Mammary epithelial cell (primary cell): ENCODE measurements at regions of chr14 and their contacts with region 1.

Region 1: DNA sequence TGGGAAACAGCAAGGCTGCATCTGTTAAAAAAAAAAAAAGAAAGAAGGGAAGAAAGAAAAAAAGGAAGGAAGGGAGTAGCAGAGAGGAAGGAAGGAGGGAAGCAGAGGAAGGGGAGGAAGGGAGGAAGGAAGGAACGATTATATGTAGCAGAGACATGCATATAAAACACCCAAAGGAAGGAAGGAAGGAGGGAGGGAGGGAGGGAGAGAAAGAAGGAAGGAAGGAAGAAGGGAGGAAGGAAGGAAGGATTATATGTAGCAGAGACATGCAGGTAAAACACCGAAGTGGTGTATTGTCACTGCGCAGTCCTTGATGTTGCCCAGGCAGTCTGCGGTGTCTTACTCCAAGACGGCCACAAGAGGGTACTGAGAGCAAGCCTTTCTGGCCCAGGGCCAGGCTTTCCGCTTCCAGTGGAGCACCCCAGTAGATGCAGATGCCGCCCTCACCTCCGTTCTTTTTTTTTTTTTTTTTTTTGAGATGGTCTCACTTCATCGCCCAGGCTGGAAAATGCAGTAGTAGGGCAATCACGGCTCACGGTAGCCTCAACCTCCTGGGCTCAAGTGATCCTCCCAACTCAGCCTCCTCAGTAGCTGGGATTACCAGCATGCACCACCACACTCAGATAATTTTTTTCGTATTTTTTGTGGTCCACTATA is 5.8 kb upstream of the LBHD2 start:
- DNase-seq: peak; percentile 58
- H3K4me3 ChIP-seq: no peak overlapping the region
- H3K27ac ChIP-seq: no peak overlapping the region
- H3K4me1 ChIP-seq: peaks cover 7% of the 10 kb centered on the region
- H3K27me3 ChIP-seq: no peaks in the 10 kb centered on the region
- CTCF ChIP-seq: peak; percentile 82 to 85

Region 2: DNA sequence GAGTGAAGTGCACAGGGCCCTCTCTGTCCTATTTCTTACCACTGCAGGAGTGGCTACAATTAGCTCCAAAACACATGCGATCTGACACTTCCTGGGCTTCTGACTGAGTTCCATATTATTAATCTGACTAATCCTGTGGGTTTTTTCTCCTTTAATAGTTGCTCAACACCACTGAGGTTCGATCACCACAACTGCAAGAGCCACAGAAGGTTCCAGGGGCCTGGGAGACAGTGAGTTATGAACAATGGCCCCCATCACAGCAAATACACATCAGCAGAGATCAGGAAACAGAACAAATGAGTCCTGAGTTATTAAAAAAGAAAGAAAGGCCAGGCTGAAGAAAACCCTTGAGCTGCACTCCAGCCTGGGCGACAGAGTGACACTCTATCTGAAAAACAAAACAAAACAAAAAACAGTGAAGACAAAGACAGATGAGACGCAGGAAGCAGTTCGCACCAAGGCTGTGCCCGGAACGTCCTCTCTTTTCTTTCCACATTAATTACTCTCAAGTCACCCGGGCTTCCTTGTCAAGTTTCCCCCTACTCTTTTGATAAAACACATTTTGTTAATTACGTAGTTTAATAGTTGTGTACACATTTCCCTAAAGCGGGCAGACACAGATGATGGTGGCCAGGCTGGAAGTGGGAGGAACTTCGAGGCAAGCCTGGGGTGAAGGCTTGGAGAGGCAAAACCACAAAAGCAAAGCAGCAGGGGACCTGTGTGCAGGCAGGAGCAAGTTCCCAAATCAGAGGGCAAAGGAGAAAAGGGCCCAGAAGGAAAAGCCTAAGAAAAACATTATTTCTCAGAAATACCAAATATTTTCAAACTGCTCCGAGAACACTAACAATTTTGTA is 63.5 kb before region 1 on chr14:
- CTCF ChIA-PET with region 1: no interaction called
- dilution Hi-C with region 1: no loop called
- in situ Hi-C with region 1: no loop called
- intact Hi-C with region 1: no loop called
- DNase-seq: peak; percentile 57
- H3K4me3 ChIP-seq: no peak overlapping the region
- H3K27ac ChIP-seq: no peak overlapping the region
- H3K4me1 ChIP-seq: peaks cover 19% of the 10 kb centered on the region
- H3K27me3 ChIP-seq: no peaks in the 10 kb centered on the region
- CTCF ChIP-seq: no peak

Region 3: GRCh38 chr14:103031956-103032355 is 46.3 kb before region 1 on chr14:
- CTCF ChIA-PET with region 1: interaction called, 26 read pairs
- dilution Hi-C with region 1: no loop called
- in situ Hi-C with region 1: no loop called
- intact Hi-C with region 1: no loop called
- DNase-seq: no peak
- H3K4me3 ChIP-seq: no peak overlapping the region
- H3K27ac ChIP-seq: no peak overlapping the region
- H3K4me1 ChIP-seq: peaks cover 3% of the 10 kb centered on the region
- H3K27me3 ChIP-seq: no peaks in the 10 kb centered on the region
- CTCF ChIP-seq: peak; percentile 23 to 44

Region 4: GRCh38 chr14:103045371-103045869 is 32.8 kb before region 1 on chr14:
- CTCF ChIA-PET with region 1: no interaction called
- dilution Hi-C with region 1: no loop called
- in situ Hi-C with region 1: no loop called
- intact Hi-C with region 1: no loop called
- DNase-seq: no peak
- H3K4me3 ChIP-seq: no peak overlapping the region
- H3K27ac ChIP-seq: no peak overlapping the region
- H3K4me1 ChIP-seq: no peaks in the 10 kb centered on the region
- H3K27me3 ChIP-seq: no peaks in the 10 kb centered on the region
- CTCF ChIP-seq: no peak

Region 5: GRCh38 chr14:103057365-103058096 is 20.7 kb before region 1 on chr14 and contains the start of gene CDC42BPB:
- CTCF ChIA-PET with region 1: no interaction called
- dilution Hi-C with region 1: no loop called
- in situ Hi-C with region 1: no loop called
- intact Hi-C with region 1: no loop called
- DNase-seq: peak; percentile 90
- H3K4me3 ChIP-seq: peak within 1 kb of the TSS; percentile 97 to 99 (median 99)
- H3K27ac ChIP-seq: peak within 1 kb of the TSS; percentile 54
- H3K4me1 ChIP-seq: peaks cover 17% of the 10 kb centered on the region
- H3K27me3 ChIP-seq: no peaks in the 10 kb centered on the region
- CTCF ChIP-seq: no peak
- total RNA-seq, gene CDC42BPB: 73.5 to 82.5 TPM

Region 6: GRCh38 chr14:103281496-103282231 is 203.4 kb after region 1 on chr14:
- CTCF ChIA-PET with region 1: interaction called, 4 read pairs
- dilution Hi-C with region 1: no loop called
- in situ Hi-C with region 1: loop called in 1 of 2 experiments (anchors 10 kb)
- intact Hi-C with region 1: no loop called
- DNase-seq: peak; percentile 24
- H3K4me3 ChIP-seq: no peak overlapping the region
- H3K27ac ChIP-seq: no peak overlapping the region
- H3K4me1 ChIP-seq: peaks cover 5% of the 10 kb centered on the region
- H3K27me3 ChIP-seq: peaks cover 15% of the 10 kb centered on the region
- CTCF ChIP-seq: peak in 1 of 2 donors; percentile 51

Region 7: DNA sequence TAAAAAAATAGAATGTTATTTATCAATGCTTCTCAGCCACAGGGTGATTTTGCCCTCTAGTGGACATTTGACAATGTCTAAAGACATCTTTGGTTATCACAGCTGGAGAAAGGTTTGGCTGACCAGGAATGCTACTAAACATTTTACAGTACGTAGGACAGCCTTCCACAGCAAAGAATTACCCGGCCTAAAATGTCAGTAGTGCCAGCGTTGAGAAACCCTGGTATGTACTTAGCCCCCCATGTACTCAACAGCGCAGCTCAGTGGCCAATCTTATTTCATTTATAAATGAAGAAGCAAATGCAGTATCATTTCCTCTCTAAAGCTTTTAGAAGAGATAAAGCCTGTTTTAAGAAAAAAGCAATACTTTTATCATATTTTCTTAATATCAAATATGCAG is 312.8 kb after region 1 on chr14:
- CTCF ChIA-PET with region 1: no interaction called
- dilution Hi-C with region 1: no loop called
- in situ Hi-C with region 1: no loop called
- intact Hi-C with region 1: loop called (anchors 5 kb)
- DNase-seq: peak; percentile 51
- H3K4me3 ChIP-seq: no peak overlapping the region
- H3K27ac ChIP-seq: no peak overlapping the region
- H3K4me1 ChIP-seq: peaks cover 25% of the 10 kb centered on the region
- H3K27me3 ChIP-seq: no peaks in the 10 kb centered on the region
- CTCF ChIP-seq: peak; percentile 70 to 74

Region 8: DNA sequence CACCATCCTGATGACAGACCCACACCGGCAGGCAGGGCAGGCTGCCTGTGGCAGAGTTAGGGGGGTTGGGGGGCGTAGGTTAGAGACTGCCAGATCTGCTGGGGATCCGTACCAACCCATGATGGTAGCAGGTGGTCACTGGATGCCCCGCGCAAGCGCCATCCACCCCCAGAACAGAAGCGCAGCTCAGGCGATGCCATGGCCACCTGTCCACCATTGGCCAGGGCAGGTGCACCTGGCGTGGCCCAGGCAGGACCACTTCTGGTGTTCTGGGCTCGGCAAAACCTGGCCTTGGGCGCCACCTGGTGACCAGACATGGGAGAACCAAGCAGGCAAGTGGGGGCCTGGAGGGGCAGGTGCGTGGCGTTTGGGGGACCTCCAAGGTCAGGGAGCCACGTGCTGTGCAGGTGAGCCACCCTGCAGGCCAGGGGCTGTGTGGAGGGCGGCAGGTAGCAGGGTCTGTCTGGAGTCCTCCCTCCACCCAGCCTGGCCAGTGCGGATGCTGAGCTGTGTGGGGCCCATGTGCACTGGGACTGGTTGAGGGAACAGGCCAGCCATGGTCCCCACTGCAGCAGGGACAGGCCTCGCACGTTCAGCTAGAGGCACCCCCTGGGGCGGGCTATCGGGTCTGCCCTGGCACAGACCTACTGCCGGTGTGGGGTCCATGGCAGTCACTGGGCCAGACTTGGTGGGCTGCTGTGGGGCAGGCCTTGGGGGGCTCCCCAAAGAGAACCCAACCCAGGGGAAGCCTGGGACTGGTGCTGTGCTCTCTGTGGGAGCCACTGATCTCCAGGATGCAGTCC is 468.6 kb after region 1 on chr14:
- CTCF ChIA-PET with region 1: no interaction called
- dilution Hi-C with region 1: no loop called
- in situ Hi-C with region 1: no loop called
- intact Hi-C with region 1: loop called (anchors 5 kb)
- DNase-seq: peak; percentile 46
- H3K4me3 ChIP-seq: no peak overlapping the region
- H3K27ac ChIP-seq: no peak overlapping the region
- H3K4me1 ChIP-seq: peaks cover 36% of the 10 kb centered on the region
- H3K27me3 ChIP-seq: no peaks in the 10 kb centered on the region
- CTCF ChIP-seq: peak; percentile 70 to 86